Psoas muscle (tissue), 8 donors: ENCODE measurements at regions of chr5 and their contacts with region 1.

Region 1: DNA sequence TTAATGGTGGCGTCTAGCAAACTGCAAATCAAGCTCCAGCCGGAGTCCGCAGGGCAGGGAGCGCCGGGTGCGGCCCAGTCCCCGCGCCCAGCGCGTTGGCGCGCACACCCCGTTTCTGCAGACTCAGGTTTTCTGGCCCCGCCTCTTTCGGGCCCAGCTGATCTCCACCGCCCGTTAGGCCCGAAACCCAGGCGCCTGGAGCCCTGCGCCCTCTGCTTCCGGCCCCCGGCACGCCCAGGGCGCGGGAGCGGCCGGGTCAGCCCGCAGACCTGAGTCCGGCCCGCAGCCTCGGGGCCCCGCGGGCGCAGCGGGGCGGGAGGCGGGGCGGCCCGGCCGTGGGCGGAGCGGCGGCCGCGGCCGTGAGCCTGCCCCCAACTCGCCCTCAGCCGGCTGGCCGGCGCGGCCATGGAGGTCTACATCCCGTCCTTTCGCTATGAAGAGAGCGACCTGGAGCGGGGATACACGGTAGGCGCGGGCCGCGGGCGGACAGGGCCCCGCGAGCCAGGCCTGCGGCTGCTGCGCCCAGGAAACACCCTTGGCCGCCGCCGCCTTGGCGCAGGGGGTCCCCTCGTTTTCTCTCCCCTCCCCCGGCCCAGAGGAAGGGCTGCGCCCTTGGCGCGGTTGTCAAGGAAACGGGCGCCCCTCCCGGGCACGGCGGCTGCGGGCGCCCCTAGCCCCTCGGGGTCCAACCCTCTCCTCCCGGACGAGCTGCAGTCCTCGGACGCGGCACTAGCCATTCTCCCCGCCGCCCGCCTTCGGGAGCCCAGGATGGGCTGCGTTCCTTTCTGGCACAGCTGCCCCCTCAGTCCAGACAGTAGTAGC is at the start of gene SNX24:
- DNase-seq: peak; percentile 87 to 92
- ATAC-seq: peak; percentile 85 to 93 (median 92)
- H3K4me3 ChIP-seq: peak within 1 kb of the TSS; percentile 98
- H3K27ac ChIP-seq: peak within 1 kb of the TSS; percentile 83
- H3K4me1 ChIP-seq: peaks cover 13% of the 10 kb centered on the region
- H3K27me3 ChIP-seq: no peaks in the 10 kb centered on the region
- CTCF ChIP-seq: no peak
- total RNA-seq, gene SNX24: 8.8 to 11.9 (median 10.0) TPM

Region 2: DNA sequence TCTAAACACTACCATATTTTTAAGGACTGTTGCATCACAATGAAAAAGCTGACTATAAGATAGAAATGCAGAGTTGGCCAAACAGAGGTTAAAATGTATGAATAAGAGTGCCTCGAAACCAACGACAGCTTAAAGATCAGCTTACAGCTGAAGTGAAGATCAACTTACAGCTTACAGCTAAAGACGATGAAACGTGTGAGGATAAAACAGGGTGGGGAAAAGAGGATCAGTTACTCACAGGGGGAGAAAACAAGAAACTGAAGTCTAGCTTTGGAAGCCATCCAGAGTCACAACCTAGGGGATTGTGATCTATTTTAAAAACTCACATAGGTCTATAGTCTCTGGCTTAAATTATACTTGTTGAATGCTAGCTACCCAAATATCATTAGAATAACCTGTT is 313.4 kb before region 1 on chr5:
- intact Hi-C with region 1: no loop called
- DNase-seq: no peak
- ATAC-seq: no peak
- H3K4me3 ChIP-seq: no peak overlapping the region
- H3K27ac ChIP-seq: no peak overlapping the region
- H3K4me1 ChIP-seq: no peaks in the 10 kb centered on the region
- H3K27me3 ChIP-seq: no peaks in the 10 kb centered on the region
- CTCF ChIP-seq: no peak

Region 3: DNA sequence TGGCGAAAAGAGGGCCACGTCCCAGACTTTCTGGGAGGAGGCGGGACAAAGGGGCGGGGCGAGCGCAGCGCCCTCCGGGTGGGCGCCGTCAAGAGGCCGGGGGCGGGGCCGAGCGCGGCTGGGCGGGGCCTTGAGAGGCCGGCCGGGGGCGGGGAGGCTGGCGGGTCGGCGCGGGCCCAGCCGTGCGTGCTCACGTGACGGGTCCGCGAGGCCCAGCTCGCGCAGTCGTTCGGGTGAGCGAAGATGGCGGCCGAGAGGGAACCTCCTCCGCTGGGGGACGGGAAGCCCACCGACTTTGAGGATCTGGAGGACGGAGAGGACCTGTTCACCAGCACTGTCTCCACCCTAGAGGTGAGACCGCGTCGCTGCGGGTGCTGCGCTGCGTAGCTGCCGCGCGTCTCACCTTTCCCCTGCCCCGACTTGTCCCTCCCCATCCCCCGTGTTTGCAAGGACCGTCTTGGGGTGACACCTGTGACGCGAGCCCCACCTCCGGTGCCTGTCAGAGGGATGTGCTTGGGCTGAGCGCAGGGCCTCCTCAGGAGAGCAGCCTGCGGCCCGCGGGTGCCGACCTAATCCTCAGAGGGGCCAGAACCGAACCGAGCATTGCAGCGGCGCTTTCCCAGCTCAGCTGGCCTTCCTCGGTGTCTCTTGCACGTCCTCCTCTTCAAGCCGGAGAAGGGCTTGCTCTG is 70.4 kb before region 1 on chr5 and contains the start of gene SNX2:
- intact Hi-C with region 1: loop called in 1 of 2 experiments (anchors 2 kb)
- DNase-seq: peak; percentile 95 to 97
- ATAC-seq: peak; percentile 99 to 100 (median 99)
- H3K4me3 ChIP-seq: peak within 1 kb of the TSS; percentile 93
- H3K27ac ChIP-seq: peak within 1 kb of the TSS; percentile 88
- H3K4me1 ChIP-seq: peaks cover 10% of the 10 kb centered on the region
- H3K27me3 ChIP-seq: no peaks in the 10 kb centered on the region
- CTCF ChIP-seq: peak; percentile 34
- total RNA-seq, gene SNX2: 32.8 to 39.8 (median 35.4) TPM

Region 4: GRCh38 chr5:123036391-123037103 is 191.1 kb after region 1 on chr5 and contains the start of gene PPIC:
- intact Hi-C with region 1: loop called in 1 of 2 experiments (anchors 2 kb)
- DNase-seq: peak; percentile 90 to 93
- ATAC-seq: peak; percentile 96 to 98 (median 97)
- H3K4me3 ChIP-seq: peak within 1 kb of the TSS; percentile 91
- H3K27ac ChIP-seq: peak within 1 kb of the TSS; percentile 90
- H3K4me1 ChIP-seq: peaks cover 8% of the 10 kb centered on the region
- H3K27me3 ChIP-seq: no peaks in the 10 kb centered on the region
- CTCF ChIP-seq: no peak
- total RNA-seq, gene PPIC: 13.7 to 27.4 (median 16.5) TPM

Region 5: GRCh38 chr5:123089914-123090670 is 244.7 kb after region 1 on chr5:
- intact Hi-C with region 1: loop called in 1 of 2 experiments (anchors 10 kb)
- DNase-seq: peak in 1 of 2 donors; percentile 39
- ATAC-seq: peak; percentile 21 to 45 (median 34)
- H3K4me3 ChIP-seq: peak overlapping the region; percentile 71
- H3K27ac ChIP-seq: no peak overlapping the region
- H3K4me1 ChIP-seq: peaks cover 15% of the 10 kb centered on the region
- H3K27me3 ChIP-seq: peaks cover 0 to 98% (median 57%) of the 10 kb centered on the region in 3 donors
- CTCF ChIP-seq: no peak

Region 6: GRCh38 chr5:123423278-123424149 is 578.1 kb after region 1 on chr5 and contains the start of gene CEP120:
- intact Hi-C with region 1: loop called in 1 of 2 experiments (anchors 5 kb)
- DNase-seq: peak; percentile 98 to 99
- ATAC-seq: peak; percentile 99 to 100 (median 100)
- H3K4me3 ChIP-seq: peak within 1 kb of the TSS; percentile 89
- H3K27ac ChIP-seq: peak within 1 kb of the TSS; percentile 83
- H3K4me1 ChIP-seq: peaks cover 11% of the 10 kb centered on the region
- H3K27me3 ChIP-seq: no peaks in the 10 kb centered on the region
- CTCF ChIP-seq: peak; percentile 77
- total RNA-seq, gene CEP120: 3.9 to 15.0 (median 6.3) TPM